Naive thymus-derived CD4-positive, alpha-beta T cell (primary cell): ENCODE measurements at regions of chr2 and their contacts with region 1.

Region 1: DNA sequence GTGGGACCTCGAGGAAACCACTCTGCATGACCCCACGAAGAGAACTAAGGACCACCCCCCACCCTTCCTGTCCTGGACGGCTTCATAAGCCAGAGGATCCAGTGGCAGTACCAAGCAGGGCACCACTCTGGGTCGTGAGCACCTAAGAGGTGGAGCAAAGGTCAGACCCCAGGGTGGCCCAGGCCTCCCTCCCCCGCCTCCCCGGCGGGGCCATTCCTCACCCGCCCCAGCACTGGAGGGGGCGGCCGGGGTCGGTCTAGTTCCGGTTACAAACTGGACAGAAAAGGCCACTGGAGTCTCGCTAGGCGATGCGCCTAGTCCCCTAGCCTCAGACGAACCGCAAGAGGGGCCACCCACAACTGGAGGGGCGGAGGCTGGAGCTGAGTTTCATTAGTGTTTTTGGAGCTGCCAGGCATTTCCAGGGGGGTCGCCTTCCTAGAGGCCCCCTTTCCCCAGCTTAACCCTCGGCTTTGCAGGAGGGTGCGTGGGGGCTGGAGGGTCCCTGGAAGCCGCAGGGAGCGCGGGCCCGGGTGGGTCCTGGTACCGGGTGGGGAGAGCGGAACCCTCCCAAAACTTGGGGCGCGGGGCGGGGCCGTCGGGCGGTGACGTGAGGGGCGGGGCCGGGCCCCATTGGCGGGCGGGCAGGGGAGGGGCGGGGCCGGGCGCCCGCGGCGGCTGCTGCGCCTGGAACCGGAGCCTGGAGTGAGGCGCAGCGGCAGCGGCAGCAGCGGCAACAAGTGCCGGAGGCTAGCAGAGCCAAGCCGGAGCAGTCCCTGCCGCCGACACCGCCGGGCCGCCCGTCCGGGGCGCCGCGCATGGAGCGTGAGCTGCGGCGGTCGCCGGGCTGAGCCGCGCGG is at the start of gene B3GNT2:
- DNase-seq: peak; percentile 66 to 88 (median 80)
- ATAC-seq: peak; percentile 89
- H3K4me3 ChIP-seq: peak within 1 kb of the TSS; percentile 98
- H3K4me3 Mint-ChIP-seq: peak within 1 kb of the TSS; percentile 82 to 93 (median 89)
- H3K27ac ChIP-seq: peak within 1 kb of the TSS; percentile 86
- H3K27ac Mint-ChIP-seq: peak within 1 kb of the TSS in 7 of 9 donors; percentile 83 to 95 (median 91)
- H3K4me1 ChIP-seq: peaks cover 27 to 36% of the 10 kb centered on the region in 2 donors
- H3K4me1 Mint-ChIP-seq: peaks cover 28 to 44% (median 31%) of the 10 kb centered on the region in 7 donors
- H3K27me3 ChIP-seq: no peaks in the 10 kb centered on the region
- H3K27me3 Mint-ChIP-seq: peaks cover 0 to 6% (median 0%) of the 10 kb centered on the region in 5 donors
- total RNA-seq, gene B3GNT2: 16.9 to 37.0 (median 34.7) TPM

Region 2: DNA sequence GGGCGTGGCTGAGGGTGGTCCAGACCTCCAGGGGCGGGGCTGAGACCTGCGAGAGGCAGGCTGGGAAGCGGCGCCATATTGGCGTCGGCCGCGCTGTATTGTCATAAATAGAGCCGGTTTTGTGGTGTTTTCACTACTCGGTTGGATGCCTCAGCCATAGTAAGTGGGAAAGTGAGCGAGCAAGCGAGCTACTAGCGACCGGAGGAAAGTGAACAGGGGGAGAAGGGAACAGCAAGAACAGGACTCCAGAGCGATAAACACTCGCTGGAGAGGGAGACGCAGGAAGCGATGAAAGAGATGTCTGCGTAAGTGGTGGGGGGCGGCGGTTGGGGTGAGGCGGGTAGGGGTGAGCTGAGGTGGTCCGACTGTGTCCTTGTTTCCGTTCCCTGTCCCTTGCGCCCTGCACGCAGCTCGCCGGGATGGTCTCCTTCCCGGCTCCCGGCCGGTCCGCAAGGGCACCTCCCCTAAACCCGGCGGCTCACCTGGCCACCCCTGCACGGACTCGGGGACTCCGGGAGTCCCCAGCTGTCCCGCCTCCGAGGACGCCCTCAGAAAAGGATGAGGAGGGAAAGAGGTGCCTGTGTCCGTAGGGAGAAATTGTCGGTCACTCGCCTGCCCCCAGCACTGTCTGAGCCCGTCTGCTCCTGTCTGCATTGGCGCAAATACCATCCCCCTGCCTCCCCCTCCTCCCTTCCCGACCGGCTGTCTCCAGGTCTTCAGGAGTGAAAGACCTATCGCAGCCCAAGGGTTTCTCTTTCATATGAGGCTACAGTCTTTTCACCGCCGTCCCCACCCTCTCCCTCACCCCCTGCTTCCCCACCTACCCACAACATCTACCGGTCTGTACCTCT is 1439.2 kb before region 1 on chr2 and contains the start of gene PAPOLG:
- CTCF ChIA-PET with region 1: no interaction called
- POLR2A ChIA-PET with region 1: no interaction called
- intact Hi-C with region 1: loop called in 1 of 2 experiments (anchors 5 kb)
- DNase-seq: peak; percentile 90 to 97 (median 93)
- ATAC-seq: peak; percentile 100
- H3K4me3 ChIP-seq: peak within 1 kb of the TSS; percentile 86
- H3K4me3 Mint-ChIP-seq: peak within 1 kb of the TSS; percentile 94 to 100 (median 98)
- H3K27ac ChIP-seq: peak within 1 kb of the TSS; percentile 85
- H3K27ac Mint-ChIP-seq: peak within 1 kb of the TSS; percentile 94 to 100 (median 98)
- H3K4me1 ChIP-seq: peaks cover 0 to 13% of the 10 kb centered on the region in 2 donors
- H3K4me1 Mint-ChIP-seq: peaks cover 24 to 53% (median 46%) of the 10 kb centered on the region in 7 donors
- H3K27me3 ChIP-seq: no peaks in the 10 kb centered on the region
- H3K27me3 Mint-ChIP-seq: no peaks in the 10 kb centered on the region
- total RNA-seq, gene PAPOLG: 15.1 to 42.4 (median 22.9) TPM

Region 3: DNA sequence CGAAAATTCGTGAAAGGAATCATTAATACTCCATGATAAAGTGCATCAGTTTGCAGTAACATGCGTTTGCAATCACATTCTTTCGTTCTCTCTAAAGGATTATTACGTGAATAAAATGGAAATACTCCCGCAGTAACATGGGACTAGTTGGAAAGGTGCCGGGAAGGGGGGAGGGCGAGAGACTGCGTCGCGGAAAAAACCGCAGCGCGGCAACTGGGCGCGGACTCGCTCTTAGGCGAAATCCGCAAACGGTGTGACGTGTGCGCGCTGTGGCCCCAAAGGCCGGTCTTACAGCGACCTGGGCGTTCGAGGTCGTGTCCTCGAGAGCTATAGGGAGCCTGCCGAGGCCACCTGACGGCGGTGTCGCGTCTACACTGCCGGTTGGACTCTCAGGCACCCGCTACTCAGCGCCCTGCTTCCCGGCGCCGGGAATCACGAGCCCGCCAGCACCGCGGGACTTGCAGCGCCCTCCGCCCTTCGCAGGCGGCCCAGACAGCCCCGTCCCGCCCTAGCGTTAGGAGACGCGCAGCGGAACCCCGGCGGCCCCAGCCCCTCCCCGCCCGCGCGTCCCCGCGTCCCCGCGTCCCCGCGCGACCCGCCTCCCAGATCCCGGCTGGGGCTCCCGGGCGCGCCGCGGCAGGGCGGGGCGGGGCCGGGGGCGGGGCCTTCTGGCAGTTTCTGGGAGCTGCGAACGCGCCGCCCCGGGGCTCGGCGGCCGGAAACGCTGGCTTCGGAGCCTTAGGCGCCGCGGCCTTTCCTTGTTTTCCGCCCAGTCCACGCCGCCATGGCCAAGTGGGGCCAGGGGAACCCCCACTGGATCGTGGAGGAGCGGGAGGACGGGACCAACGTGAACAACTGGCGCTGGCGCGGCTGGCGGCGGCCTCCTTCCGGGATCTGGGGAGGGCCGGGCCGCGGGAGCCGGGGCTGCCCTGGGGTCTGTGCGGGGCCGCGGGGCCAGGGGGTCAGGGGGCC is 1018.6 kb before region 1 on chr2:
- CTCF ChIA-PET with region 1: no interaction called
- POLR2A ChIA-PET with region 1: no interaction called
- intact Hi-C with region 1: loop called (anchors 5 to 10 kb)
- DNase-seq: peak; percentile 89 to 97 (median 93)
- ATAC-seq: peak; percentile 95
- H3K4me3 ChIP-seq: peak overlapping the region; percentile 82
- H3K4me3 Mint-ChIP-seq: peak overlapping the region; percentile 90 to 100 (median 94)
- H3K27ac ChIP-seq: peak overlapping the region; percentile 97
- H3K27ac Mint-ChIP-seq: peak overlapping the region; percentile 89 to 97 (median 95)
- H3K4me1 ChIP-seq: peaks cover 27 to 41% of the 10 kb centered on the region in 2 donors
- H3K4me1 Mint-ChIP-seq: peaks cover 38 to 53% (median 48%) of the 10 kb centered on the region in 7 donors
- H3K27me3 ChIP-seq: no peaks in the 10 kb centered on the region
- H3K27me3 Mint-ChIP-seq: peaks cover 0 to 8% (median 0%) of the 10 kb centered on the region in 5 donors

Region 4: GRCh38 chr2:61707969-61708852 is 487.4 kb before region 1 on chr2:
- CTCF ChIA-PET with region 1: no interaction called
- POLR2A ChIA-PET with region 1: no interaction called
- intact Hi-C with region 1: no loop called
- DNase-seq: no peak
- ATAC-seq: no peak
- H3K4me3 ChIP-seq: no peak overlapping the region
- H3K4me3 Mint-ChIP-seq: no peak overlapping the region
- H3K27ac ChIP-seq: no peak overlapping the region
- H3K27ac Mint-ChIP-seq: no peak overlapping the region
- H3K4me1 ChIP-seq: no peaks in the 10 kb centered on the region
- H3K4me1 Mint-ChIP-seq: peaks cover 0 to 4% (median 0%) of the 10 kb centered on the region in 7 donors
- H3K27me3 ChIP-seq: no peaks in the 10 kb centered on the region
- H3K27me3 Mint-ChIP-seq: peaks cover 0 to 4% (median 0%) of the 10 kb centered on the region in 5 donors

Region 5: GRCh38 chr2:61888267-61889055 is 307.2 kb before region 1 on chr2 and contains the start of gene CCT4:
- CTCF ChIA-PET with region 1: interaction called, 4 read pairs
- POLR2A ChIA-PET with region 1: no interaction called
- intact Hi-C with region 1: loop called (anchors 1 kb)
- DNase-seq: peak; percentile 86 to 99 (median 95)
- ATAC-seq: peak; percentile 94
- H3K4me3 ChIP-seq: peak within 1 kb of the TSS; percentile 92
- H3K4me3 Mint-ChIP-seq: peak within 1 kb of the TSS; percentile 85 to 100 (median 99)
- H3K27ac ChIP-seq: peak within 1 kb of the TSS; percentile 98
- H3K27ac Mint-ChIP-seq: peak within 1 kb of the TSS; percentile 98 to 100 (median 100)
- H3K4me1 ChIP-seq: peaks cover 15 to 17% of the 10 kb centered on the region in 2 donors
- H3K4me1 Mint-ChIP-seq: peaks cover 11 to 34% (median 29%) of the 10 kb centered on the region in 7 donors
- H3K27me3 ChIP-seq: no peaks in the 10 kb centered on the region
- H3K27me3 Mint-ChIP-seq: no peaks in the 10 kb centered on the region
- total RNA-seq, gene CCT4: 84.2 to 177 (median 90.3) TPM

Region 6: GRCh38 chr2:62248221-62248620 is 52.6 kb after region 1 on chr2:
- CTCF ChIA-PET with region 1: no interaction called
- POLR2A ChIA-PET with region 1: no interaction called
- intact Hi-C with region 1: loop called in 1 of 2 experiments (anchors 10 kb)
- DNase-seq: no peak
- ATAC-seq: no peak
- H3K4me3 ChIP-seq: no peak overlapping the region
- H3K4me3 Mint-ChIP-seq: no peak overlapping the region
- H3K27ac ChIP-seq: no peak overlapping the region
- H3K27ac Mint-ChIP-seq: no peak overlapping the region
- H3K4me1 ChIP-seq: no peaks in the 10 kb centered on the region
- H3K4me1 Mint-ChIP-seq: no peaks in the 10 kb centered on the region
- H3K27me3 ChIP-seq: no peaks in the 10 kb centered on the region
- H3K27me3 Mint-ChIP-seq: no peaks in the 10 kb centered on the region

Region 7: GRCh38 chr2:62270728-62271127 is 75.1 kb after region 1 on chr2:
- CTCF ChIA-PET with region 1: no interaction called
- POLR2A ChIA-PET with region 1: no interaction called
- intact Hi-C with region 1: no loop called
- DNase-seq: peak in 1 of 9 donors; percentile 2
- ATAC-seq: no peak
- H3K4me3 ChIP-seq: no peak overlapping the region
- H3K4me3 Mint-ChIP-seq: no peak overlapping the region
- H3K27ac ChIP-seq: no peak overlapping the region
- H3K27ac Mint-ChIP-seq: no peak overlapping the region
- H3K4me1 ChIP-seq: no peaks in the 10 kb centered on the region
- H3K4me1 Mint-ChIP-seq: peaks cover 0 to 3% (median 0%) of the 10 kb centered on the region in 7 donors
- H3K27me3 ChIP-seq: no peaks in the 10 kb centered on the region
- H3K27me3 Mint-ChIP-seq: peaks cover 0 to 5% (median 0%) of the 10 kb centered on the region in 5 donors

Region 8: DNA sequence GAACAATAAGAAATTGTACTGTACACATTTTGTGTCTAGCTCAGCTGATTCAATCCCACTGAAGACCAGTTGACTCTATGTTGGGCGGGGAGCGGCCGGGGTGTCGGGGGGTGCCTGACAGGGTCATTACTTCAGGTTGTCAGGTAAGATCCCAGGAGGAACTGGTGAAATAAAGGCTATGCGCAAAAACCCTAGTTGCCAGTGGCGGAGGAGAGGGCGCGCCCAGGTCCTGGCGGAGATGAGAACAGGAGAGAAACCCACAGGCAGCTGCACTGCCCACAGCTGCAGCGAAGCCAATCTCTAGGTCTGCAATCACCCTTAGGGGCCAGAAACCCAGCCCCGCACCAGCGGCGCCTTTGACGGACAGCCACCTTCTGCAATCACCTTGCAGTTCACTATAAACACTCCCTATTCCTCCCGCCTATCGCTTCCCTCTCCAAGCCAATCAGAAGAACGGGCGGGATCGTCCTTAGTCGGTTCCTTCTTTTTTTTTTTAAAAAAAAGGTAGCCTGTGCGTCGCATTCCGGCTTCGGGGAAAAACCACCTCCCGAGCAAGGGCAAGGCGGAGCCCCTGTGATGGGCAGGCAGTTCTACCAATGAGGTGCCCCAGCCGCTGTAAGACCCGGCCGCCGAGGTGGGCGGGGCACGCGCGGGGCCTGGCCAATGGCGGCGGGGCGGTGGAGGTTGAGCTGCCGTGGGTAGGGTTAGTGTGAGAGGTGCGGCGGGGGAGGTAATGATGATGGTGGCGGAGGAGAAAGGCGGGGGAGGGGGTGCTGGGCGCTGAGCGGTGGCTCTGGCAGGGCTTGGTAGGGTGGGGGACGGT is 509.6 kb after region 1 on chr2 and contains the start of gene EHBP1:
- CTCF ChIA-PET with region 1: no interaction called
- POLR2A ChIA-PET with region 1: no interaction called
- intact Hi-C with region 1: loop called (anchors 1 kb)
- DNase-seq: peak; percentile 95 to 99 (median 98)
- ATAC-seq: peak; percentile 98
- H3K4me3 ChIP-seq: peak within 1 kb of the TSS; percentile 82
- H3K4me3 Mint-ChIP-seq: peak within 1 kb of the TSS; percentile 83 to 98 (median 92)
- H3K27ac ChIP-seq: peak within 1 kb of the TSS; percentile 72
- H3K27ac Mint-ChIP-seq: peak within 1 kb of the TSS; percentile 76 to 93 (median 84)
- H3K4me1 ChIP-seq: peaks cover 0 to 25% of the 10 kb centered on the region in 2 donors
- H3K4me1 Mint-ChIP-seq: peaks cover 24 to 48% (median 31%) of the 10 kb centered on the region in 7 donors
- H3K27me3 ChIP-seq: no peaks in the 10 kb centered on the region
- H3K27me3 Mint-ChIP-seq: peaks cover 0 to 13% (median 0%) of the 10 kb centered on the region in 5 donors
- total RNA-seq, gene EHBP1: 23.8 to 31.5 (median 30.0) TPM

Region 9: GRCh38 chr2:62831729-62832128 is 636.1 kb after region 1 on chr2:
- CTCF ChIA-PET with region 1: no interaction called
- POLR2A ChIA-PET with region 1: no interaction called
- intact Hi-C with region 1: no loop called
- DNase-seq: no peak
- ATAC-seq: no peak
- H3K4me3 ChIP-seq: no peak overlapping the region
- H3K4me3 Mint-ChIP-seq: no peak overlapping the region
- H3K27ac ChIP-seq: no peak overlapping the region
- H3K27ac Mint-ChIP-seq: no peak overlapping the region
- H3K4me1 ChIP-seq: no peaks in the 10 kb centered on the region
- H3K4me1 Mint-ChIP-seq: peaks cover 0 to 2% (median 0%) of the 10 kb centered on the region in 7 donors
- H3K27me3 ChIP-seq: no peaks in the 10 kb centered on the region
- H3K27me3 Mint-ChIP-seq: no peaks in the 10 kb centered on the region